ENCODE measurements at regions of chr15 and their contacts with region 1.

Region 1: DNA sequence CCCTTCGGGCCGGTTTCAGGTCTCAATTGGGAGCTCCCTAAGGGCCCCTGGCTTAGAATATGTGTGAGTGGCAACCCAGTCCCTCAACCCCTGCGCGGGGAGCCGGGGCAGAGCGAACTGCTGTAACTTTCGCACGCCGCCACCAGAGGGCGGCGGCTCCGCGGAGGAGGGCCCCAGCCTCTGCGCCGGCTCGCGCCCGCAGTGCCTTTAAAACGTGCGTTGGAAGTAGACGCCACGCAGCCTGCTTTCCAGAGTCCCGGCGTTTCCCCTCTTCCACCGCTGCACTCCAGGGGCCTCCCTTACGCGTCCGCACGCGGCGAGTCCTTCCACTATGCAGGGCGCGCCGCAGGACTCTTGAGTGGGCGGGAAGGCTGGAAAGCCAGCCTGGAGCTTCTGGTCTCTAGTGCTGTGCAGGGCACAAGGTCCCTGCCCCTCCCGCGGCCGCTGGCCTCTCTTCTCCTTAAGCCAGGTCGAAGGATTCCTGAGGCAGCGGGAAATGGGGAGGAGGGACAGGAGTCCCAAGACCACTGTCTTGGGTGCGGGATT is 23.7 kb upstream of the RNU6-1 start:
- DNase-seq: peak; percentile 76
- H3K4me3 Mint-ChIP-seq: no peak overlapping the region
- H3K27ac Mint-ChIP-seq: no peak overlapping the region
- H3K4me1 Mint-ChIP-seq: peaks cover 3% of the 10 kb centered on the region
- H3K27me3 Mint-ChIP-seq: peaks cover 10% of the 10 kb centered on the region

Region 2: GRCh38 chr15:67531379-67532059 is 332.0 kb before region 1 on chr15:
- CTCF ChIA-PET with region 1: no interaction called
- intact Hi-C with region 1: no loop called
- DNase-seq: no peak
- H3K4me3 Mint-ChIP-seq: no peak overlapping the region
- H3K27ac Mint-ChIP-seq: no peak overlapping the region
- H3K4me1 Mint-ChIP-seq: peaks cover 9% of the 10 kb centered on the region
- H3K27me3 Mint-ChIP-seq: no peaks in the 10 kb centered on the region

Region 3: DNA sequence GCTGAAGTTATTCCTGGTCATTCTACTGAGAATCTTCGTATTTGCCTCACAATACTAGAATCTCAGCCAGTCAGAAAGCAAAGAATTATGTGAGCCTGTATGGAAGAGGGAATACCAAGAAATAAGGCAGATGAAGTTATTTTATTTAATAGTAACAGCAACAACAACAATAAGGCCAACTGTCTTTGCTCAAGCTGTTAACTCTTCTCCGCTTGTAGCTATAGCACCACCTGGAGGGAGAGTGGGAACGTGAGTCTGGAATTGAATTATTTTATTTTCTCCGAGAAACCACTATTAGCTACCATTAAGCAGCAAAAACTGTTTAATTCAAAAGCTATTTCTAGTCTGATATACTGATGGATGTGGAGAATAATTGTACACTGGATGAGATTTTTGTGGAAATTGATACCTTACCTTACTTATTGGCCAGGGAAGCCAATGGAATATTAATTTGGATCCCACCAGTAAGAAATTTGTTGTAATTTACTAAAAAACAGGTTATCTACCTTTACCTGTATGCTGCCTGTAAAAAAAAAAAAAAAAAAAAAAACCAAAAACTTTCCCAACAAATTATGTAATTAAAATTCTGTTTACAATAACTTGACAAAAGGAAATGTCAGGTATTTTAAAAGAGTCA is 291.5 kb after region 1 on chr15:
- CTCF ChIA-PET with region 1: interaction called, 44 read pairs
- intact Hi-C with region 1: loop called (anchors 1 kb)
- DNase-seq: peak; percentile 25
- H3K4me3 Mint-ChIP-seq: no peak overlapping the region
- H3K27ac Mint-ChIP-seq: no peak overlapping the region
- H3K4me1 Mint-ChIP-seq: no peaks in the 10 kb centered on the region
- H3K27me3 Mint-ChIP-seq: no peaks in the 10 kb centered on the region

Region 4: GRCh38 chr15:68210821-68211655 is 347.5 kb after region 1 on chr15:
- CTCF ChIA-PET with region 1: interaction called, 4 read pairs
- intact Hi-C with region 1: loop called (anchors 1 kb)
- DNase-seq: peak; percentile 56
- H3K4me3 Mint-ChIP-seq: no peak overlapping the region
- H3K27ac Mint-ChIP-seq: no peak overlapping the region
- H3K4me1 Mint-ChIP-seq: peaks cover 25% of the 10 kb centered on the region
- H3K27me3 Mint-ChIP-seq: no peaks in the 10 kb centered on the region

Region 5: GRCh38 chr15:68229386-68230156 is 366.1 kb after region 1 on chr15 and contains the start of gene CLN6:
- CTCF ChIA-PET with region 1: interaction called, 4 read pairs
- intact Hi-C with region 1: loop called (anchors 5 kb)
- DNase-seq: peak; percentile 75
- H3K4me3 Mint-ChIP-seq: peak within 1 kb of the TSS; percentile 85
- H3K27ac Mint-ChIP-seq: peak within 1 kb of the TSS; percentile 80
- H3K4me1 Mint-ChIP-seq: peaks cover 43% of the 10 kb centered on the region
- H3K27me3 Mint-ChIP-seq: no peaks in the 10 kb centered on the region
- total RNA-seq, gene CLN6: 30.5 to 34.2 TPM

Measured in activated naive CD4-positive, alpha-beta T cell treated with anti-CD3 and anti-CD28 coated beads for 36 hours (primary cell).